Activated naive CD4-positive, alpha-beta T cell treated with anti-CD3 and anti-CD28 coated beads for 36 hours (primary cell): ENCODE measurements at regions of chr10 and their contacts with region 1.

Region 1: GRCh38 chr10:17673456-17674061 is 29.6 kb downstream of the STAM start:
- DNase-seq: no peak
- H3K4me3 Mint-ChIP-seq: no peak overlapping the region
- H3K27ac Mint-ChIP-seq: no peak overlapping the region
- H3K4me1 Mint-ChIP-seq: peaks cover 49% of the 10 kb centered on the region
- H3K27me3 Mint-ChIP-seq: no peaks in the 10 kb centered on the region

Region 2: DNA sequence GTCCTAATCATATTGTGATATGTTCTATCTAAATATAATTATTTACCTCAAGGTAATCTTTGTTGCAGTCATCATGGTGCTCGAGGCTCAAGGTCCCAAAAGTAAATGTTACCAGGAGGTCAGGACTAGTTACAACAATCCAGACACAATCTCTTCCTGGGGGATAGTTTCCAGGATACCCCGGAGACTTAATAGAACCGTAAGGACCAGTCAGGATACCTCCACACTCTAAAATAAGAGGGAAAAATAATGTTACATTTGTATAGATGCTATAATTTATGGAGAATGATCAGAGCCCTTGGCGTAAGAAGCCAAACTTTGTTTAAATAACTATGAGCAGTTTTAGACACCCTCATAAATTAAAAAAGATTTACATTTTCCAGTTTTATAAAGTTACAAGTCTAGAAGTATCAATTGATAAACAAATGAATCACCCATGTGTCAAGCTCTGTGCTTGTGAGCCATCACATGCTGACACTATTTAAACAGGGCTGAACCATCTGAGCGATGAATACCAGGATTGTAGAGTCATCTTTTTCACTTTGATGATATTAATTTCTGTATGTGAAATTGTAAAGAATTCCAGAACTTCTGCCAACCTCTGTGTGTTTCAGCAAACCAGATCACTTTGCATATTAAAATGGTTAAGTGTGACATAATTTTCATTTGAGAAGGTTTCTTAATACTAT is 585.3 kb before region 1 on chr10:
- CTCF ChIA-PET with region 1: no interaction called
- intact Hi-C with region 1: no loop called
- DNase-seq: no peak
- H3K4me3 Mint-ChIP-seq: no peak overlapping the region
- H3K27ac Mint-ChIP-seq: no peak overlapping the region
- H3K4me1 Mint-ChIP-seq: no peaks in the 10 kb centered on the region
- H3K27me3 Mint-ChIP-seq: no peaks in the 10 kb centered on the region

Region 3: GRCh38 chr10:17536221-17536620 is 137.3 kb before region 1 on chr10:
- CTCF ChIA-PET with region 1: no interaction called
- intact Hi-C with region 1: no loop called
- DNase-seq: no peak
- H3K4me3 Mint-ChIP-seq: no peak overlapping the region
- H3K27ac Mint-ChIP-seq: no peak overlapping the region
- H3K4me1 Mint-ChIP-seq: no peaks in the 10 kb centered on the region
- H3K27me3 Mint-ChIP-seq: no peaks in the 10 kb centered on the region

Region 4: GRCh38 chr10:17685233-17685840 is 11.8 kb after region 1 on chr10:
- CTCF ChIA-PET with region 1: no interaction called
- intact Hi-C with region 1: loop called (anchors 1 kb)
- DNase-seq: peak; percentile 66
- H3K4me3 Mint-ChIP-seq: no peak overlapping the region
- H3K27ac Mint-ChIP-seq: peak overlapping the region; percentile 41
- H3K4me1 Mint-ChIP-seq: peaks cover 30% of the 10 kb centered on the region
- H3K27me3 Mint-ChIP-seq: no peaks in the 10 kb centered on the region

Region 5: DNA sequence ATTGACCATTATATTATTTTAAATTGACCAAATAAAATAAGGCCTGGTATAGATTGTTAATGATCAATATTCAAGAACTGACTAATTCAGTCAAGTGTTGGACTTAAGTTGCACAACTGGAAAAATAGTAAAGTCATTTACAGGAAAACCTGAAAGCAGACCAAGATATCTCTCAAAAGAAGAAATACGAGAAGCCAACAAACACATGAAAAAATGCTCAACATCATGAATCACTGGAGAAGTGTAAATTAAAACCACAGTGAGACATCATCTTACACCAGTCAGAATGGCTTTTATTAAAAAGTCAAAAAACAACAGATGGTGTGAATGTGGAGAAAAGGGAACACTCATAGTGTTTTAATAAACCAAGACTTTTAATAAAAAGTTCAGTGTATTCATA is 1294.6 kb after region 1 on chr10:
- CTCF ChIA-PET with region 1: no interaction called
- intact Hi-C with region 1: no loop called
- DNase-seq: no peak
- H3K4me3 Mint-ChIP-seq: no peak overlapping the region
- H3K27ac Mint-ChIP-seq: no peak overlapping the region
- H3K4me1 Mint-ChIP-seq: no peaks in the 10 kb centered on the region
- H3K27me3 Mint-ChIP-seq: no peaks in the 10 kb centered on the region